Naive thymus-derived CD4-positive, alpha-beta T cell (primary cell): ENCODE measurements at regions of chr2 and their contacts with region 1.

Region 1: GRCh38 chr2:69306822-69307578 is 80.0 kb downstream of the GFPT1 start:
- DNase-seq: peak; percentile 17 to 69 (median 45)
- ATAC-seq: peak; percentile 85
- H3K4me3 ChIP-seq: peak overlapping the region; percentile 69
- H3K4me3 Mint-ChIP-seq: peak overlapping the region; percentile 59 to 82 (median 77)
- H3K27ac ChIP-seq: no peak overlapping the region
- H3K27ac Mint-ChIP-seq: no peak overlapping the region
- H3K4me1 ChIP-seq: peaks cover 0 to 15% of the 10 kb centered on the region in 2 donors
- H3K4me1 Mint-ChIP-seq: peaks cover 9 to 24% (median 17%) of the 10 kb centered on the region in 7 donors
- H3K27me3 ChIP-seq: peaks cover 0 to 7% of the 10 kb centered on the region in 2 donors
- H3K27me3 Mint-ChIP-seq: peaks cover 21 to 59% (median 31%) of the 10 kb centered on the region in 5 donors

Region 2: DNA sequence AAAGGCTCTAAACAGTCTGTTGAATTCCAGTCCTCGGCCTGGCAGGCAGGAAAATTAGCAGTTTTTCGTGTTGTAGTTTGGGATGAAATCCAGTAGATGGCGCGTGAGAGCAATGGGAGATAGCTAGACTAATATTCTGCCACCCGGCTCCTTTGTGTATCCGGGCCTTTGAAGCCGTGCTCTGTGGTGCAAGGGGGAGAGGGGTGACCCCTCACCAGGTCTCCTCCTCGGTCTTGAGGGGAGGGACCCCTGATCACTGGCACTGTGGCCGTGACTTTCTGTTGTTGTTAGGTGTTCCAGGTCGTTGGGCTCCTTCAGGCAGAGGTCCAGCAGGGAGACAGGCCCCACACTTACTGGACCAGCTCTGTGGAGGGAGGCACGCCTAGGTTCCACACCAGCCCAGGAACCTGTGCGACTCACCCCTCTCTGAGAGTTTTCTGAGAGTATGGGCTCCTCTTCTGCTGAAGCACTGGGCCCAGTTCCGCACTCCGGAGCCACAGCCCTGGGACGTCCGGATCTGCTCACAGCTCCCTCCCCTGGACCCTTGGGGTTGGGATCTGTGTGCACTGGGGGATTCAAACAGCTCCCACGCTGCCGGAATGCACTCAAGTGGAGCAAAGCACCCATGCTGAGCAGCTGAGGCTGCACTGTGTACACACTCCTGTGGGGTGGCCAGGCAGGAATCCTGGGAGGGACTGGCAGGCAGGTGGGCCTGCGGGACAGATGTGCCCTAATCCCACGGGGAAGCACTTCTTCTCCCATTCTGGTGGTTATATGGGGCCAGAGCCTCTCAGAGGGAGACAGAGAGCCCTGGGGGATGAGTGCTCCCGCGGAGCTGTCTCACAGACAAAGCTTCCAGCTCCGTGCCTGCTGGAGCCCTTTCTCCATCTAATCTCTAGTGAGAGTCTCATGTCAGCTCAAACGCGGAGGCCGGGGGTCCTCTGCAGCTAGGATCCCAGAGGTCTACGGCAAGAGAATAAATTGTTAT is 363.1 kb before region 1 on chr2:
- CTCF ChIA-PET with region 1: interaction called, 3 read pairs
- POLR2A ChIA-PET with region 1: no interaction called
- intact Hi-C with region 1: loop called (anchors 1 kb)
- DNase-seq: peak; percentile 23 to 62 (median 49)
- ATAC-seq: peak; percentile 74
- H3K4me3 ChIP-seq: no peak overlapping the region
- H3K4me3 Mint-ChIP-seq: no peak overlapping the region
- H3K27ac ChIP-seq: no peak overlapping the region
- H3K27ac Mint-ChIP-seq: peak overlapping the region in 1 of 9 donors; percentile 69
- H3K4me1 ChIP-seq: no peaks in the 10 kb centered on the region
- H3K4me1 Mint-ChIP-seq: peaks cover 0 to 4% (median 0%) of the 10 kb centered on the region in 7 donors
- H3K27me3 ChIP-seq: peaks cover 0 to 4% of the 10 kb centered on the region in 2 donors
- H3K27me3 Mint-ChIP-seq: peaks cover 14 to 67% (median 33%) of the 10 kb centered on the region in 5 donors

Region 3: DNA sequence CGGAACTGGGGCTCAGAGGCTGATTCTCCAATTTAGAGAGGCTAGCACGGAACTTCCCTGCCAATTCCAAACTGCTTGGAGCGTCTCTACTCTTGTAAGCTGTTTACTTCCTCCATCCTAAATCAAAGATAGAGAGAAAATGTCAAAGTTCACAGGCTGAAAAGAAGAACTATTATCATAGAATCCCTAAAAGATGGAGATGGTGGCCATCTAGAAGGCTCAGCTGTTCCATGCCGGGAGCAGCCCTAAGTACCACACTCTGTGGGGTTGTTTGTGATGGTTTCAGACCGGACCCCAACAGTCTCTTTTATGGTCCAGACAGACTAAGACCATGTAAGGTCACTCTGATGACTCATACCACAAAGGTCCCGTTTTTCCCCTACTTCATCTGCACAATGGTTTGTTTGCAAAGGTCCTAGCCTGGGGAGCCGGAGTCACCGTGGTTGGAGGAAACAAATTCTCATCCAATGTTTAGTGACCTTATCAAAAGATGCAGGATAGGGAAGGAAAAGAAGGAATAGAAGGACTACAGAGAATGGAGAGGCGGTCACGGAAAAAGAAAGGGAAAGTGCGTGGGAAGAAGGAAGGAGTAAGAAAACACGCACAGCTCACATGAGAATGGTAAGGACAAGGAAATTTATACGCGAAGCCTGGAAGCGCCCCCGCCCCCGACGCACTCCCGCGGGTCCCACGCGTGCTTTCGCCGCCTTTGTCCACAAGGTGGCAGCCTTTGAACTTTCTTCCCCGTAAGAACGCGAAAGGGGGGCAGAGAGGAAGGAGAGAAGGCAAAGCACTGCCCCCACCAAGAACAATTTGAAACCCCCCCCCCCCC is 294.5 kb before region 1 on chr2:
- CTCF ChIA-PET with region 1: no interaction called
- POLR2A ChIA-PET with region 1: no interaction called
- intact Hi-C with region 1: loop called (anchors 1 to 5 kb)
- DNase-seq: peak in 8 of 9 donors; percentile 5 to 39 (median 30)
- ATAC-seq: peak; percentile 72
- H3K4me3 ChIP-seq: peak overlapping the region; percentile 56
- H3K4me3 Mint-ChIP-seq: peak overlapping the region; percentile 76 to 89 (median 86)
- H3K27ac ChIP-seq: no peak overlapping the region
- H3K27ac Mint-ChIP-seq: peak overlapping the region in 1 of 9 donors; percentile 20
- H3K4me1 ChIP-seq: peaks cover 0 to 5% of the 10 kb centered on the region in 2 donors
- H3K4me1 Mint-ChIP-seq: peaks cover 7 to 17% (median 14%) of the 10 kb centered on the region in 7 donors
- H3K27me3 ChIP-seq: peaks cover 0 to 7% of the 10 kb centered on the region in 2 donors
- H3K27me3 Mint-ChIP-seq: peaks cover 33 to 75% (median 47%) of the 10 kb centered on the region in 5 donors

Region 4: GRCh38 chr2:69026026-69026425 is 281.0 kb before region 1 on chr2:
- CTCF ChIA-PET with region 1: no interaction called
- POLR2A ChIA-PET with region 1: no interaction called
- intact Hi-C with region 1: loop called (anchors 1 kb)
- DNase-seq: no peak
- ATAC-seq: peak; percentile 64
- H3K4me3 ChIP-seq: no peak overlapping the region
- H3K4me3 Mint-ChIP-seq: no peak overlapping the region
- H3K27ac ChIP-seq: no peak overlapping the region
- H3K27ac Mint-ChIP-seq: no peak overlapping the region
- H3K4me1 ChIP-seq: no peaks in the 10 kb centered on the region
- H3K4me1 Mint-ChIP-seq: no peaks in the 10 kb centered on the region
- H3K27me3 ChIP-seq: no peaks in the 10 kb centered on the region
- H3K27me3 Mint-ChIP-seq: peaks cover 19 to 43% (median 29%) of the 10 kb centered on the region in 5 donors

Region 5: GRCh38 chr2:69353360-69353759 is 46.4 kb after region 1 on chr2:
- CTCF ChIA-PET with region 1: no interaction called
- POLR2A ChIA-PET with region 1: no interaction called
- intact Hi-C with region 1: no loop called
- DNase-seq: no peak
- ATAC-seq: no peak
- H3K4me3 ChIP-seq: no peak overlapping the region
- H3K4me3 Mint-ChIP-seq: no peak overlapping the region
- H3K27ac ChIP-seq: no peak overlapping the region
- H3K27ac Mint-ChIP-seq: peak overlapping the region in 1 of 9 donors; percentile 70
- H3K4me1 ChIP-seq: no peaks in the 10 kb centered on the region
- H3K4me1 Mint-ChIP-seq: no peaks in the 10 kb centered on the region
- H3K27me3 ChIP-seq: no peaks in the 10 kb centered on the region
- H3K27me3 Mint-ChIP-seq: no peaks in the 10 kb centered on the region